ENCODE measurements at regions of chr1 and their contacts with region 1.

Region 1: GRCh38 chr1:110119837-110120236 is 7.6 kb downstream of the UBL4B start:
- DNase-seq: no peak
- ATAC-seq: no peak
- H3K4me3 ChIP-seq: no peak overlapping the region
- H3K27ac ChIP-seq: no peak overlapping the region
- H3K4me1 ChIP-seq: no peaks in the 10 kb centered on the region
- H3K27me3 ChIP-seq: peaks cover 0 to 4% (median 0%) of the 10 kb centered on the region in 3 donors
- CTCF ChIP-seq: no peak
- POLR2A ChIP-seq: no peak

Region 2: GRCh38 chr1:110048923-110049601 is 70.8 kb before region 1 on chr1:
- in situ Hi-C with region 1: no loop called
- intact Hi-C with region 1: no loop called
- DNase-seq: no peak
- ATAC-seq: no peak
- H3K4me3 ChIP-seq: no peak overlapping the region
- H3K27ac ChIP-seq: peak overlapping the region in 1 of 4 donors; percentile 54
- H3K4me1 ChIP-seq: peaks cover 4 to 30% of the 10 kb centered on the region in 2 donors
- H3K27me3 ChIP-seq: no peaks in the 10 kb centered on the region
- CTCF ChIP-seq: no peak
- POLR2A ChIP-seq: no peak

Region 3: GRCh38 chr1:110714374-110714995 is 594.6 kb after region 1 on chr1:
- in situ Hi-C with region 1: no loop called
- intact Hi-C with region 1: loop called (anchors 5 kb)
- DNase-seq: no peak
- ATAC-seq: no peak
- H3K4me3 ChIP-seq: no peak overlapping the region
- H3K27ac ChIP-seq: no peak overlapping the region
- H3K4me1 ChIP-seq: no peaks in the 10 kb centered on the region
- H3K27me3 ChIP-seq: no peaks in the 10 kb centered on the region
- CTCF ChIP-seq: no peak
- POLR2A ChIP-seq: no peak